Right cardiac atrium (tissue), 5 donors: ENCODE measurements at regions of chr13 and their contacts with region 1.

Region 1: GRCh38 chr13:33723772-33724435 is 94.0 kb upstream of the RFC3 start:
- DNase-seq: peak; percentile 68 to 82 (median 69)
- ATAC-seq: peak; percentile 82 to 84
- H3K4me3 ChIP-seq: no peak overlapping the region
- H3K27ac ChIP-seq: no peak overlapping the region
- H3K4me1 ChIP-seq: peaks cover 2% of the 10 kb centered on the region
- H3K27me3 ChIP-seq: no peaks in the 10 kb centered on the region

Region 2: GRCh38 chr13:33554919-33555791 is 168.7 kb before region 1 on chr13:
- intact Hi-C with region 1: loop called in 2 of 4 experiments (anchors 5 kb)
- DNase-seq: no peak
- ATAC-seq: peak in 1 of 2 donors; percentile 36
- H3K4me3 ChIP-seq: no peak overlapping the region
- H3K27ac ChIP-seq: no peak overlapping the region
- H3K4me1 ChIP-seq: no peaks in the 10 kb centered on the region
- H3K27me3 ChIP-seq: no peaks in the 10 kb centered on the region

Region 3: DNA sequence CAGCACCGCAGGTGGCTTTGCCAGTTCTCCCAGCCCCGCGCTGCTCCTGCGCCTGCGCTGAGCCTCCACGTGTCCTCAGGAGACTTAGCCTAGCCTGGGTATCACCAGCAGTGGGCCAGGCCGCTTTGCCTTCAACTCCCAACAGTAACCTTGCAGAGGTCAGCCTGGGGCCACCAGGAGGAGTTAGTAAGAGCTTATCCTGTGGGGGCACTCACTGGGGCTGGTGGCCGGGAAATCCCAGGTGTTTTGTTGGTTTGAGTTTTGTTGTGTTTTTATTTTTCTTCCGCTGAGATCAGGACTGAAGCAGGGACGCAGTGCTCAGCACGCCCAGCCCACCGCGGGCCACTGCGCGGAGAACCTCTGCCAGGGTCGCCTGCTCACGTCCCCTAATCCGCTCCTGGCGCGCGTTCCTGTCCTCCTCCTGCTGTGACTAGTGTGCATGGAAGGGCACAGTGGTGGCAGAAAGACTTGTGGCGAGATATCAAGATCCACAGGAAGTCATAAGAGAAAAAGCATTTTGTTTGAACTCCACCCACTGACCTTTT is 113.4 kb before region 1 on chr13:
- intact Hi-C with region 1: loop called in 1 of 4 experiments (anchors 5 kb)
- DNase-seq: peak; percentile 83 to 91 (median 89)
- ATAC-seq: peak; percentile 89 to 91
- H3K4me3 ChIP-seq: peak overlapping the region; percentile 38
- H3K27ac ChIP-seq: peak overlapping the region; percentile 97
- H3K4me1 ChIP-seq: peaks cover 11% of the 10 kb centered on the region
- H3K27me3 ChIP-seq: no peaks in the 10 kb centered on the region